Common myeloid progenitor, CD34-positive (primary cell): ENCODE measurements at regions of chr17 and their contacts with region 1.

Region 1: GRCh38 chr17:58352014-58352842 is at the start of gene SUPT4H1:
- DNase-seq: peak; percentile 94 to 97 (median 96)
- H3K4me3 ChIP-seq: peak within 1 kb of the TSS; percentile 80 to 99 (median 95)
- H3K27ac ChIP-seq: peak within 1 kb of the TSS; percentile 82 to 92
- H3K4me1 ChIP-seq: peaks cover 12 to 33% (median 22%) of the 10 kb centered on the region in 4 experiments
- H3K27me3 ChIP-seq: no peaks in the 10 kb centered on the region

Region 2: DNA sequence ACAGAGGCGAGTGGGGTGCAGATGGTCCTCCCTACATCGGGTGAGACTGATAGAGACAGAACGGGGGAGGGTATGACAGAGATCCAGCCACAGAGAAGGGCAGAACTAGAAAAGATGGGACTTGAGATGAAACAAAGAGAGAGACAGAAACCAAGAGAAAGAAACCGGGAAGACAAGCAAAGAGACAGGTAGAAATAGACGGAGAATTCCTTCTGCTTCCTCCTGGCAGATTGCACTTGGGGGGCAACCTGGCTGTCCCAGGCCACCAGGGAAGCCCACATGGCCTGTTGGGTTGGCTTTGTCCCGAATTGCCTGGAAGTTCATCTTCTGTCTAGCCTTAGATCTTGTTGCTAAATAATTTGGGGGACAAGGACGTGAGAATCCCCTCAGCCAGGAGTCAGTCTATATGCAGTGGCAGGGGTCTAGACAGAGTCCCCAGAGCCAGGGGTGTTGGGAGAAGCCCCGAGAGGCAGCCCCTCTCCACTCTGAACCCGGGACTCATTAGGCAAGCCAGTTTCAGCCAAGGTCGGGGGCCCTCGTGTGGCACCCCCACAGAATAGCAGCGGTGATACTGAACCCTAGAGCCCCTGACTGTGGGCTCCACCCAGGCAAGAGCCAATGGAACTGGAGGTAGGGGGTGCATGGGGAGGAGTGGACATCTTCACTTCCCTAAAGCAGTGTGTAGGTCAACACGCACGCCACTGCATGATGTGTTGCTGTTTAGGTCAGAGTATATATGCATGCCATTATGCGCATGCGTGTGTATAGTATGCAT is 23.0 kb before region 1 on chr17:
- CTCF ChIA-PET with region 1: interaction called, 9 read pairs
- POLR2A ChIA-PET with region 1: interaction called, 59 read pairs
- DNase-seq: peak; percentile 85 to 92 (median 92)
- H3K4me3 ChIP-seq: peak overlapping the region in 6 of 7 experiments; percentile 78 to 100 (median 99)
- H3K27ac ChIP-seq: peak overlapping the region; percentile 56 to 99
- H3K4me1 ChIP-seq: peaks cover 16 to 80% (median 73%) of the 10 kb centered on the region in 4 experiments
- H3K27me3 ChIP-seq: peaks cover 0 to 6% (median 0%) of the 10 kb centered on the region in 5 experiments

Region 3: GRCh38 chr17:58337600-58338453 is 14.4 kb before region 1 on chr17:
- CTCF ChIA-PET with region 1: interaction called, 54 read pairs
- POLR2A ChIA-PET with region 1: interaction called, 59 read pairs
- DNase-seq: peak; percentile 93 to 98 (median 97)
- H3K4me3 ChIP-seq: peak overlapping the region; percentile 30 to 100 (median 99)
- H3K27ac ChIP-seq: peak overlapping the region; percentile 96 to 99
- H3K4me1 ChIP-seq: peaks cover 45 to 97% (median 89%) of the 10 kb centered on the region in 4 experiments
- H3K27me3 ChIP-seq: no peaks in the 10 kb centered on the region

Region 4: DNA sequence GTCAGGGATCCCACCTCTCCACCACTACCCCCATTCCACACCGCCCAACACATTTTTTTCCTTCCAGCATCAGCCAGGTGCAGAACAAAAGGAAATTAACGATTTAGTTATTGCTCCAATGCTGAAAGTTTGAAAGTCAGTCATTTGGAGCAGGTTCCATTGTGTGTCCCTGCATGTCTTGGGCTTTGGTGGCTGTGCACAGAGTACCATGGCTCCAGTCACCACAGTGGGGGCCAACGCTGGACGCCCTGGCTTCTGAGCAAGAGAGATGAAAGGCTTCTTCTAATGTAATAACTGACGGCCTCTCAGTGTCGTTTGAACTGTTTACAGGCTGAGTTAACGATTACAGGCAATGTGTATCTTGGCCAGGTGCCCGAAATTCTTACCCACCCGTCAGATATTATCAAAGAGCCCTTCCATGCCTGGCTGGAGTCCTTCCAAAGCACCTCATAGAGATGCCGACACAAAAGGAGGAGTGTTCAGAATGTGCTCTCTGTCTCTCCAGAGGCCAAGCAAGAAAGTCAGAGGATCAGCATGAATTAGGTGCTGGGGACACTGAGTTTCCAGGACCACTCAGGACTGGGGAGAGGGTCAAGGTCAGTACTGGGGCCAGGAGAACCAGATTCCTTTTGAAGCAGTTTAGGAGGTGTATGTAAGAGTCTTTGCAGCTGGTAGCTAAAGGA is 39.2 kb after region 1 on chr17:
- CTCF ChIA-PET with region 1: no interaction called
- POLR2A ChIA-PET with region 1: no interaction called
- DNase-seq: peak; percentile 15 to 38 (median 28)
- H3K4me3 ChIP-seq: peak overlapping the region in 1 of 7 experiments; percentile 24
- H3K27ac ChIP-seq: no peak overlapping the region
- H3K4me1 ChIP-seq: peaks cover 0 to 6% (median 0%) of the 10 kb centered on the region in 4 experiments
- H3K27me3 ChIP-seq: no peaks in the 10 kb centered on the region

Region 5: GRCh38 chr17:58447039-58447975 is 95.1 kb after region 1 on chr17:
- CTCF ChIA-PET with region 1: no interaction called
- POLR2A ChIA-PET with region 1: no interaction called
- DNase-seq: peak; percentile 85 to 87 (median 86)
- H3K4me3 ChIP-seq: no peak overlapping the region
- H3K27ac ChIP-seq: no peak overlapping the region
- H3K4me1 ChIP-seq: no peaks in the 10 kb centered on the region
- H3K27me3 ChIP-seq: no peaks in the 10 kb centered on the region